ENCODE measurements at regions of chr4 and their contacts with region 1.

Region 1: DNA sequence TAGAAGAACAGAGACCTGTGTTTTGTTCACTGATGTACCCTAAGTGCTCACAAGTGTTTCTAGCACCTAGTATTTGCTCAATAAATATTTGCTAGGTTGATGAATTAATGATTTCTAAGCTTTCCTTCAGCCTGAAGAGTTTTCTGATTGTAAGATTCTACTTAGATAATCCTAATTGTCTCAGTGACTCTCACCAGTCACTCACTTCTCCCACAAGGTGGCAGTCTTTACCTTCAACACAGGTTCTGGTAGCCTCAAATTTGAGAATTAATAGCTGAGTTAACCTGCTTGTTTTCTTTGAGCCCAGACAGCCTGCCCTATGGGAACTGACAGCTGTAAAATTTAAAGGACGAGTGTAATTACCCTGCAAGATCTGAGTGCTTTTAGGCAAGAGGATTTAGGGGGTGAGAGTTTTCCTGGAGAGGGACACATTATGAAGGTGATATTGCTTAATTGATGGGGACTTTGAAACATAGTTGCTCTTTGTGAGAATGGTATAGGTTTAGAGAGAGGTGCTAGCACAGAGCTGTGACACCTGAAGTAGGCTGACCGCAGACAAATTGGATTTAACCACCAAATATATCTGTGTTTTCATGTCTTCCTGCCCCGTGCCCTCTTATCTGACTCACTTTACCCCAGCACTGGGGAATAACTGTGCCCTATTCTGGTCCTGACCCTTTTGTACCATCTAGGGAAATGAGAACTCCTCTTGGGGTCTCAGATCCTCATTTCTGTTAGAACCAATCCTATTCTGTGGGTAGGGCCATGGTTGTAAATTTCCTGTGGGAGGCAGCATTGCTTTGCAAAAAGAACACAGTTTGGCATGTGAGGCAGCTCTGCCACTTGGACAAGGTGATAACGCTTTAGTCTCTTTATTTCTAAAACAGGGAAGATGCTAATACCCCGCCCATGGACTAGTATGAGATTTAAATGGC is 27.7 kb downstream of the CD38 start:
- DNase-seq: peak; percentile 4
- H3K4me3 ChIP-seq: no peak overlapping the region
- CTCF ChIP-seq: peak; percentile 64

Region 2: DNA sequence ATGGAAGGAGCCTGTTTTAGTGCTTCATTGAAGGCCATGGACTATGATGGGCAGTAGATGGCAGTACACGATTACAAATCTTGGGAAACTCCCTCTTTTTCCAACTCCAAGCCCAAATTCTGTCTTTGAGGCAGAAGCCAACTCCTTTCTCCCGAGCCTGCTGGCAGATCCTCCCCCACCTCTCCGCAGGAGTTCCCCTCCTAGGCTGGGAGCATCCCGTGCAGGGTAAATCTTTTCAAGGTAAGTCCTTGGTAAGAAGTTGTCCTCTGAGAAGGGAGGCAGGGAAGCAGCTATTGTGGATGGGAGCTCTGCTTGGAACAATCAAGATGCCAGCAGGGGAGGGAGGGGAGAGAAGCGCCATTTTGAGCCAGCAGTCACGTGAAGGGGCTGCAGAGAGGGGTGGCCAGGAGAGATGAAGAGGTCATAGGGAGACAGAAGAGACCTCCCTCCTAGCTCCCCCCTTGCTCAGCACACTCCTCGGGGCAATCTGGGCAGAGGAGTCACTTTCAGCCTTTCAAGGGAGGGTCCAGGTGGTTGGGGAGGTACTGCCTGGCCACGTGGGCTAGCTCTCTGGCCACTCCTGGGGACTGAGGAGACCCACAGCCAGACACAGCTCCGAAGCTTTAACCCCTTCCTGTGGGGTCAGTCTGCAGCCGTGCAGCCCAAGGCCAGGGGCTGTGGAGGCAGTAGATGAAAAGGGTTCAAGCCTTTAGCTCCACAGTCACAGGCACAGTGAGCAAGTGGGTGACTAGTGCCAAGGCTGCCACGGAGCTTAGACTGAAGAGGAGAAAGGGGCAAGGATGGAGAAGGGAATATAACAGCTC is 326.5 kb before region 1 on chr4:
- CTCF ChIA-PET with region 1: interaction called, 39 read pairs
- POLR2A ChIA-PET with region 1: no interaction called
- DNase-seq: peak; percentile 42
- H3K4me3 ChIP-seq: peak overlapping the region; percentile 68
- CTCF ChIP-seq: peak; percentile 67

Region 3: GRCh38 chr4:15832523-15833451 is 26.9 kb after region 1 on chr4:
- CTCF ChIA-PET with region 1: interaction called, 19 read pairs
- POLR2A ChIA-PET with region 1: no interaction called
- DNase-seq: no peak
- H3K4me3 ChIP-seq: no peak overlapping the region
- CTCF ChIP-seq: no peak

Region 4: DNA sequence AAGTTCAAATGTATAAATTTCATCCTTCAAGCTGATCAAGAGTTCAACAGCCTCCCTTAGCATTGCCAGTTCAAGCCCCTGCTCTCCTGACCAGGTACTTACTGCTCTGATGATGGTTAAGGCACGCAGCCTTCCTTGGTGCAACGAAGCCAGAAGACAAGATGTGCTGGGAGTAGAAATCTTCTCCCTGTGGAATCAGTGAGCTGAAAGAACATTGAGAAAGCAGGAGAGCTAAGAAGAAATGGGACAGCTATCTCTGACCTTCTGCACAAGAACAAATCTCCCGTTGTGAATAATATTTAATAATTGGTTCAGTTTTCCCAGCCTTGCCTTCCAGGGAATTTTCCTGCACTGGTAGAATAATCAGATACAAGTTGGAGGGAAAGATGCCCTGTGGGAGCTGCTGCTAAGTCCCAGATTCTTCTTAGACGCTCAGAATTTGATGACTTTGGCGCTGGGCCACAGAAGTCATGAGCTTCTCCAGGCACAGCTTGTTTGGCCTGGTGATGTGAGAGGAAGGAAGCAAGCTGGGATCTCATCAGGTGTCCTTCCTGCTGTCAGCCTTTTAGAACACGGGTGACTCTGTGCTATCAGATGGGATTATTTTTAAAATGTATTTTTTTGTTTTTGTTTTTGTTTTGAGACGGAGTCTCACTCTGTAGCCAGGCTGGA is 50.1 kb after region 1 on chr4:
- CTCF ChIA-PET with region 1: interaction called, 10 read pairs
- POLR2A ChIA-PET with region 1: no interaction called
- DNase-seq: no peak
- H3K4me3 ChIP-seq: no peak overlapping the region
- CTCF ChIP-seq: no peak

Region 5: DNA sequence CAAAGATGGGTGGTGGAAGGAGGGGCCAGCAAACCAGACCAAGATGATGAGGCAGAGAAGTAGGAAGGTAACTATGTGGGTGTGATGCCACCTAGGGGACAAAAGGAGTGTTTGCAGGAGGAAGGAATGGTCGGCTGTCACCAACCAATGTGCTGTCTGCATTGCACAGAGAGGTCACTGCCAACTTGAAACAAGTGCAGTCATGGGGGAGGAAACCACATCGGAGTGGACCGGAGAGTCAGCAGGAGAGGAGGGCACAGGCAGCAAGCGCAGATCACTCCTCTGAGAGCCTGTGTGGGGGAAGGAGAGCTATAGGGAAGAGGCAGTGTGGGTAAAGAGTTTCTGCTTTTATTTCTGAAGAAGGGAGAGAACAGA is 195.6 kb after region 1 on chr4:
- CTCF ChIA-PET with region 1: interaction called, 89 read pairs
- POLR2A ChIA-PET with region 1: no interaction called
- DNase-seq: peak; percentile 14
- H3K4me3 ChIP-seq: no peak overlapping the region
- CTCF ChIP-seq: peak; percentile 87

Region 6: DNA sequence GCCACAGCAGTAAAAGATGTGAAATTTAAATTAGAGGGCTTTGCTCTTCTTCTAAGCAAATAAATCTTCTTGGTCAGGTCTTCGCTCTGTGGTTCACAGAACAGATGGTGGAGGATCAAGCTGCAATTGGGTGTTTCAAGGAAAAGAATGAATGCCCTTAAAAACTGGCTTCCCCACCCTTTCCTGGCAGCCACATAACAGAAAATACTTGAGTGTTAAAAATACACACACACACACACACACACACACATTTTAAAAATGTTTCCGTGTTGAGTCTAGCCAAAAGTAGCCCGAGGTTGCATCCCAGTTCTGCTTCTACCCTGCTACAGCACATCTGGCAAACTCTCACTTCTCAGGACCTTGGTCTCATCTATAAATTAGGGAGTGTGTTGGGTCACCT is 213.8 kb after region 1 on chr4:
- CTCF ChIA-PET with region 1: interaction called, 10 read pairs
- POLR2A ChIA-PET with region 1: no interaction called
- DNase-seq: peak; percentile 28
- H3K4me3 ChIP-seq: no peak overlapping the region
- CTCF ChIP-seq: no peak

Measured in AG04449 (cell line).